Activated CD8-positive, alpha-beta T cell treated with anti-CD3 and anti-CD28 coated beads for 36 hours (primary cell): ENCODE measurements at regions of chr10 and their contacts with region 1.

Region 1: DNA sequence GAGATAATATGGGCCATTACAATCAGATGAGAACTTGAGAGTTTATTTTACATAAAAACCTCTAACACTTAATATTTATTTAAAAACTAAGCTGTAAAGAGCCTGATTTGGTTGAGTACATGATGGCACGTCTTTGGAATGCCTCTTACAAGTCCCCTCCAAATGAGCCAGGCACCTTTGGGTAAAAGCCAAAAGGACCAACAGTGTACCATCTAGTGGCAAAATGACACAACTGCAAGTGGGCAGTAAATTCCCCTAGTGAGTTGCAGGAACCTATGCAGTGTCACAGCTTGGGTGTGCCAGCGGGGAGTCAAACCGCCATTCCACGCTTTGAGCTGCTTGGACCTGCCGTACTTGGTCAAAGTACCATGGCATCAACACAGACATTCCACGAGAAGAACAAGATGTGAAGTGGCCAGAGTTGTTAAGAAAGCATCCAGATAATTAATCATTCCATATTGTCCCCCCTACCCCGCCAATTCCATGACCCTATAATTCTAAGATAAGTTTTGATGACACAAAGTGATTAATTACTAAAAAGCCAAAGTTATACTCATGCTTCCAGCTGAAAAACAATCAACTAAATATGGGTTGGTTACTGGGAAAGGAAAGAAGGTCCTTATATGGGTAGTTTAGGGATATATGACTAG is 115.2 kb downstream of the SORBS1 start:
- DNase-seq: peak; percentile 44
- ATAC-seq: peak; percentile 72
- H3K4me3 Mint-ChIP-seq: no peak overlapping the region
- H3K27ac Mint-ChIP-seq: no peak overlapping the region
- H3K4me1 Mint-ChIP-seq: peaks cover 4% of the 10 kb centered on the region
- H3K27me3 Mint-ChIP-seq: peaks cover 5% of the 10 kb centered on the region
- CTCF ChIP-seq: peak; percentile 89

Region 2: DNA sequence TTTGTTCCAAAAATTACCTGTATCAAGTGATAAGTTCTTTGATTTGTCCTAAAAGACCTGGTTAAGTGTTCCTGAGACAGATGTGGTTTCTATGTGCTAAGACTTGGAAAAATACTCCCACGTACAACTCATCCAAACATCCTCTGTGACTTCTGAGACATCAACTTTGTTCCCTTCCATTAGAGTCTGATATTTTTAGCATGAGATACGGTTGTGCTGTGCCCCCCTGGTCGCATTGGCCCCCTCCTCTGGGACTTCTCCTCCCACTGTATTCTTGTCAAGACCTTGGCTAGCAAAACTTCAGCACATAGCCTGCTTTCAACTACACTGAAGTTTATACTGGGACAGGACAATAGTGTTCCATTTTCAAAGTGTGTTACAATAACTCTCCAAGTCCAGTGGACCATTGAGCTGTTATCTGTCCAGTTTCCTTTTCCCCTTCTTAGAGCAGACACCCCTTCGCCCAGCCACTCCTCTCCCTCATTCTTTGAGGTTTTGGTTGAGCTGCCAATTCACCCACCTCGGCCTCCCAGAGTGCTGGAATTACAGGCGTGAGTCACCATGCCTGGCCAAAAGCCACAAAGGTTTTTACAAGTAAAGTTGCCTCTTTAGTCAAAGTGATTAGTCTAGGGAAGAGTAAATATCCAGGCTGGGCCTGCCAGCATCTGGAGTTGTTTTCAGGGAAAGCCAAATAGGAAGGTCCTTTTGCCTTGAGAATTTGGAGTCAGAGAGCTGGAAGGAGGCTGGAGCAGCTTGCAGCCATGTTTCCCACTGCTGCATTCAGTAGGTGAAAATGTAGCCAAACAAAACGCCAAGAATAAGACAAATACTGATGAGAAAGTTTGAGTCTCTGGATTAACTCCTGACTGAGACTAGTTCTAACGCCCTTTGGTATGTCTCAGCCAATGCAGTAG is 137.3 kb before region 1 on chr10:
- CTCF ChIA-PET with region 1: no interaction called
- POLR2A ChIA-PET with region 1: no interaction called
- intact Hi-C with region 1: no loop called
- DNase-seq: no peak
- ATAC-seq: no peak
- H3K4me3 Mint-ChIP-seq: no peak overlapping the region
- H3K27ac Mint-ChIP-seq: no peak overlapping the region
- H3K4me1 Mint-ChIP-seq: no peaks in the 10 kb centered on the region
- H3K27me3 Mint-ChIP-seq: no peaks in the 10 kb centered on the region
- CTCF ChIP-seq: no peak

Region 3: DNA sequence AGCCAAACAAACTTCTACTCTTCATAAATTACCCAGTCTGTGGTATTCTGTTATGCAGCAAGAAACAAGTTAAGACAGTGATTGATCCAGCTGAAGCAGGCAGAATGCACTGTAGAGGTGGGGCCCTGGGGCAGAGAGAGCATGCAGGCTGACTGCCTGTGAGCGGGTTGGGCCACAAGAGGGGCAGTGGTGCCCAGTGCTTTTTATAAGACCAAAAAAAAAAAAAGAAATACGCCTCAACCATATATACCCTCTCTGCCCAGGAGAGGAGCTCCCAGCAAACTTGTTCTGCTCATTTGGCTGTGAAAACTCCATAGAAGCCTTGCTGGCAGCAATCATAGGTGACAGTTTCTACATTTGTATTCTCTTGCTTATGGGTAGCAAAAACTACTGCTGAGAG is 10.6 kb after region 1 on chr10:
- CTCF ChIA-PET with region 1: interaction called, 10 read pairs
- POLR2A ChIA-PET with region 1: no interaction called
- intact Hi-C with region 1: no loop called
- DNase-seq: no peak
- ATAC-seq: no peak
- H3K4me3 Mint-ChIP-seq: no peak overlapping the region
- H3K27ac Mint-ChIP-seq: no peak overlapping the region
- H3K4me1 Mint-ChIP-seq: no peaks in the 10 kb centered on the region
- H3K27me3 Mint-ChIP-seq: peaks cover 4% of the 10 kb centered on the region
- CTCF ChIP-seq: no peak

Region 4: DNA sequence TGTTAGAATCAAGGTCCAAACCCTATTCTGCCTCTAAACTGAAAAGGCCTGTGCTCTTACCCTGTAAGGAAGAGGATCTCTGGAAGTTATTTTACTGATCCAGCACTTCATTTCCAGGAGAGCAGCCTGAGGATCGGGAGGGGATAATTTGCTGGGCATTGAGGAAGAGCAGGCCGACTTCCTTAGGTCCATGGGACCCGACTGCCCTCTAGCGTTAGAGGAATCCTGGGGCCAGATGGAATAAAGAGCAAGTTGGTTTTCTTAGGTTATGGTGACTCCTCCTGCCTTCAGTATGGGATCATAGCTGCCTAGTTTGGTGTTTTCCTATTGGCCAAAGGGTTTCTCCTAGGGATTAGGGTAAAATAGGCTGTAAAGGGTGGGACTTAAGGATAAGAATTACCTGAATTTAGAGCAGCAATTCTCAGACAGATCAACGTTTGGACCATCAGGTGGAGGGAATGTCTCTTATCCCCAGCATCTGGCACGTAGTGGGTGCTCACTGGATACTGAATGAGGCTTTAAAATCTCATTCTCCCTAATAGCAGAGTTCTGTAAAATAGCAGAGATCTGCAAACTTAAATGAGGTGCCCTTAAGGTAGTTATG is 155.3 kb after region 1 on chr10:
- CTCF ChIA-PET with region 1: interaction called, 22 read pairs
- POLR2A ChIA-PET with region 1: no interaction called
- intact Hi-C with region 1: no loop called
- DNase-seq: peak; percentile 70
- ATAC-seq: no peak
- H3K4me3 Mint-ChIP-seq: no peak overlapping the region
- H3K27ac Mint-ChIP-seq: no peak overlapping the region
- H3K4me1 Mint-ChIP-seq: no peaks in the 10 kb centered on the region
- H3K27me3 Mint-ChIP-seq: peaks cover 1% of the 10 kb centered on the region
- CTCF ChIP-seq: peak; percentile 89